K562 (cell line): ENCODE measurements at regions of chr5 and their contacts with region 1.

Region 1: GRCh38 chr5:133111299-133111698 is 59.5 kb downstream of the HSPA4 start:
- DNase-seq: peak; percentile 79 to 90 (median 79)
- ATAC-seq: peak; percentile 92
- H3K4me3 ChIP-seq: no peak overlapping the region
- H3K27ac ChIP-seq: no peak overlapping the region
- H3K4me1 ChIP-seq: peaks cover 0 to 3% of the 10 kb centered on the region in 2 experiments; a peak in 2 of 5 replicates
- H3K27me3 ChIP-seq: peaks cover 12 to 42% of the 10 kb centered on the region in 2 experiments; a peak in 4 of 5 replicates
- CTCF ChIP-seq: peak; percentile 95 to 97 (median 96)
- EP300 ChIP-seq: no peak
- POLR2A ChIP-seq: no peak
- RAD21 ChIP-seq: peak; percentile 99 to 100

Region 2: DNA sequence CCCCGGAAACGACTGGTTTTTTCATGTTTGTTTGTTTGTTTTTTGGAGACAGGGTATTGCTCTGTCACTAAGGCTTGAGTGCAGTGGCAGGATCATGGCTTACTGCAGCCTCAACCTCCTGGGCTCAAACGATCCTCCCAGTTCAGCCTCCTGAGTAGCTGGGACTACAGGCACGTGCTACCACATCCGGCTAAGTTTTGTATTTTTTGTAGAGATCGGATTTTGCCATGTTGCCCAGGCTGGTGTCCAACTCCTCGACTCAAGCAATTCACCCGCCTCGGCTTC is 123.2 kb before region 1 on chr5:
- CTCF ChIA-PET with region 1: no interaction called
- POLR2A ChIA-PET with region 1: no interaction called
- in situ Hi-C with region 1: no loop called
- intact Hi-C with region 1: no loop called
- DNase-seq: no peak
- ATAC-seq: no peak
- H3K4me3 ChIP-seq: no peak overlapping the region
- H3K27ac ChIP-seq: no peak overlapping the region
- H3K4me1 ChIP-seq: no peaks in the 10 kb centered on the region
- H3K27me3 ChIP-seq: no peaks in the 10 kb centered on the region
- CTCF ChIP-seq: no peak
- EP300 ChIP-seq: no peak
- POLR2A ChIP-seq: no peak
- RAD21 ChIP-seq: no peak

Region 3: DNA sequence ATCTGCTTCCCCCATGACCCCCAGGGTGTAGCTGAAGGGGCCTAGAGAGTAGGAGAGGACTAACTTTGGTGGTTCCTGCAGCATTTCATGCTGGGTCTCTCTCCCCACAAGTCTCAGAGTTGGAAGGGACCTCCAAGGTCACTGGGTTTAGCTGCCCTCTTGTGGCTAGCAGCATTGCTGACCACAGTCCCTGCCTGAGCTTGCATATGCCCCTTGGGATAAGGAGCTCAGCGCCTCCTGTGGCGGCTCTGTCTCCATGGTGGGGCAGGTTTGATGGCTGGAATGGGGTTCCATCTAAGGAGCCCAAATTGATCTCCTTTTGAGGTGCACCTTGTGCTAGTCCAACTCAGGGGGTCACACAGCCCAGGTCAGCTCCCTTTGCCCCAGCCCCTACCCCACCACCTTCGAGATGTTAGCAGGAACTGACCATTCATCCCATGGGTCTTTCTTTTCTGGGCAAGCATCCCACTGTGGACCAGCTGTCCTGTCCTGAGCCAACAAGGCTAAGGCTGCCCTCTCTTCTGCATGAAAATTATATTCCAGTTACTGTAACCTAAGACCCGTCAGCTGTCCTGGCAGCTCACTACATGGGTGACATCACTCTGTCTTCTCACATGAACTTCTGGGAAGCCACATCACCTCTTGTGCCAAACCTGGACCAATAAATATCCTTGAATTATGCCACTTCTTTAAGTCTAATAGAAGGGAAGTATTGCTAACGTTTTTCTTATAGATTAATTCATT is 136.8 kb after region 1 on chr5:
- CTCF ChIA-PET with region 1: interaction called, 69 read pairs
- POLR2A ChIA-PET with region 1: interaction called, 5 read pairs
- in situ Hi-C with region 1: no loop called
- intact Hi-C with region 1: loop called (anchors 1 kb)
- DNase-seq: peak; percentile 75 to 90 (median 80)
- ATAC-seq: peak; percentile 97
- H3K4me3 ChIP-seq: no peak overlapping the region
- H3K27ac ChIP-seq: no peak overlapping the region; the same call in 2 of the 3 replicates
- H3K4me1 ChIP-seq: peaks cover 26 to 44% of the 10 kb centered on the region in 2 experiments
- H3K27me3 ChIP-seq: peaks cover 16 to 24% of the 10 kb centered on the region in 2 experiments; a peak in 4 of 5 replicates
- CTCF ChIP-seq: peak; percentile 99
- EP300 ChIP-seq: no peak; the same call in 1 of the 2 replicates
- POLR2A ChIP-seq: no peak
- RAD21 ChIP-seq: peak; percentile 96 to 98

Region 4: GRCh38 chr5:133260715-133261114 is 149.4 kb after region 1 on chr5:
- CTCF ChIA-PET with region 1: interaction called, 11 read pairs
- POLR2A ChIA-PET with region 1: no interaction called
- in situ Hi-C with region 1: no loop called
- intact Hi-C with region 1: no loop called
- DNase-seq: no peak
- ATAC-seq: peak; percentile 50; the same call in 2 of the 3 replicates
- H3K4me3 ChIP-seq: no peak overlapping the region
- H3K27ac ChIP-seq: no peak overlapping the region
- H3K4me1 ChIP-seq: no peaks in the 10 kb centered on the region
- H3K27me3 ChIP-seq: peaks cover 15 to 70% of the 10 kb centered on the region in 2 experiments
- CTCF ChIP-seq: peak in 2 of 3 experiments; percentile 22 to 41; a peak in 3 of 6 replicates
- EP300 ChIP-seq: no peak
- POLR2A ChIP-seq: no peak
- RAD21 ChIP-seq: peak in 1 of 2 experiments; percentile 56; a peak in 2 of 4 replicates

Region 5: GRCh38 chr5:133287500-133287899 is 176.2 kb after region 1 on chr5:
- CTCF ChIA-PET with region 1: interaction called, 13 read pairs
- POLR2A ChIA-PET with region 1: interaction called, 3 read pairs
- in situ Hi-C with region 1: no loop called
- intact Hi-C with region 1: loop called (anchors 1 kb)
- DNase-seq: peak; percentile 20 to 32 (median 26)
- ATAC-seq: peak; percentile 77
- H3K4me3 ChIP-seq: no peak overlapping the region
- H3K27ac ChIP-seq: no peak overlapping the region
- H3K4me1 ChIP-seq: no peaks in the 10 kb centered on the region
- H3K27me3 ChIP-seq: peaks cover 0 to 40% of the 10 kb centered on the region in 2 experiments; a peak in 4 of 5 replicates
- CTCF ChIP-seq: peak; percentile 49 to 53 (median 51); a peak in 5 of 6 replicates
- EP300 ChIP-seq: no peak
- POLR2A ChIP-seq: no peak
- RAD21 ChIP-seq: peak; percentile 56 to 63

Region 6: GRCh38 chr5:133316427-133316826 is 205.1 kb after region 1 on chr5:
- CTCF ChIA-PET with region 1: interaction called, 13 read pairs
- POLR2A ChIA-PET with region 1: no interaction called
- in situ Hi-C with region 1: no loop called
- intact Hi-C with region 1: loop called (anchors 1 kb)
- DNase-seq: peak in 3 of 4 experiments; percentile 11 to 51 (median 30)
- ATAC-seq: peak; percentile 86
- H3K4me3 ChIP-seq: no peak overlapping the region
- H3K27ac ChIP-seq: no peak overlapping the region
- H3K4me1 ChIP-seq: no peaks in the 10 kb centered on the region
- H3K27me3 ChIP-seq: peaks cover 3 to 43% of the 10 kb centered on the region in 2 experiments; a peak in 4 of 5 replicates
- CTCF ChIP-seq: peak; percentile 69 to 86 (median 83)
- EP300 ChIP-seq: no peak
- POLR2A ChIP-seq: no peak
- RAD21 ChIP-seq: peak in 1 of 2 experiments; percentile 49; a peak in 3 of 4 replicates

Region 7: DNA sequence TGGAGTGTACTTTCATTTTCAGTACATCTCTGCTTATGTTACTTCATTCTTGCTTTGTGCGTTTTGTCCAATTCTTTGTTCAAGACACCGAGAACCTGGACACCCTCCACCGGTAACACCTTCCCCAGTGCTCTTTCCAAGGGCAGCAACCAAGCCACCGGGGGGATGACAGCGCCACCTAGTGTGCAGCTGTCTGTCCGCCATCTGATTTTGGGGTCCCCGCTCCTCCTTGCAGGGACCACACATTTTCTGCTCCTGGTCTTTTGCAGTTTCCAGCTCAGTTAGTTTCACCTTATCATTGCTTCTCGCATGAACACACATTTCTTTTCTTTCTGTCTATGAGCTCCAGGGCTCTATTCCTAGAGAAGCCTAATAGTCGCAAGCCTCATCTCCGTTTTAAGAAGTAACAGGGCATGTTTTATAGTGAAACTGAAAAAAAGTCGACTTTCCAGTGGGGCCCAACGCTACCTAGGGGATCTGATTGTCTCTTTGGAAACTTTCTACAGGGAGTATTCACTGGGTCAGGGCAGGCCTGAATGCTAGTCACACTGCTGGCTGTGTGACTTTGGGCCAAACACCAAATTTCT is 349.0 kb after region 1 on chr5:
- CTCF ChIA-PET with region 1: interaction called, 7 read pairs
- POLR2A ChIA-PET with region 1: no interaction called
- in situ Hi-C with region 1: loop called (anchors 25 kb)
- intact Hi-C with region 1: loop called (anchors 5 kb)
- DNase-seq: peak; percentile 69 to 82 (median 79)
- ATAC-seq: peak; percentile 94
- H3K4me3 ChIP-seq: no peak overlapping the region
- H3K27ac ChIP-seq: no peak overlapping the region
- H3K4me1 ChIP-seq: no peaks in the 10 kb centered on the region
- H3K27me3 ChIP-seq: peaks cover 0 to 44% of the 10 kb centered on the region in 2 experiments; a peak in 3 of 5 replicates
- CTCF ChIP-seq: peak; percentile 81 to 91 (median 84)
- EP300 ChIP-seq: no peak
- POLR2A ChIP-seq: no peak
- RAD21 ChIP-seq: peak; percentile 46 to 79